Left lung (tissue), 14 donors: ENCODE measurements at regions of chr12 and their contacts with region 1.

Region 1: DNA sequence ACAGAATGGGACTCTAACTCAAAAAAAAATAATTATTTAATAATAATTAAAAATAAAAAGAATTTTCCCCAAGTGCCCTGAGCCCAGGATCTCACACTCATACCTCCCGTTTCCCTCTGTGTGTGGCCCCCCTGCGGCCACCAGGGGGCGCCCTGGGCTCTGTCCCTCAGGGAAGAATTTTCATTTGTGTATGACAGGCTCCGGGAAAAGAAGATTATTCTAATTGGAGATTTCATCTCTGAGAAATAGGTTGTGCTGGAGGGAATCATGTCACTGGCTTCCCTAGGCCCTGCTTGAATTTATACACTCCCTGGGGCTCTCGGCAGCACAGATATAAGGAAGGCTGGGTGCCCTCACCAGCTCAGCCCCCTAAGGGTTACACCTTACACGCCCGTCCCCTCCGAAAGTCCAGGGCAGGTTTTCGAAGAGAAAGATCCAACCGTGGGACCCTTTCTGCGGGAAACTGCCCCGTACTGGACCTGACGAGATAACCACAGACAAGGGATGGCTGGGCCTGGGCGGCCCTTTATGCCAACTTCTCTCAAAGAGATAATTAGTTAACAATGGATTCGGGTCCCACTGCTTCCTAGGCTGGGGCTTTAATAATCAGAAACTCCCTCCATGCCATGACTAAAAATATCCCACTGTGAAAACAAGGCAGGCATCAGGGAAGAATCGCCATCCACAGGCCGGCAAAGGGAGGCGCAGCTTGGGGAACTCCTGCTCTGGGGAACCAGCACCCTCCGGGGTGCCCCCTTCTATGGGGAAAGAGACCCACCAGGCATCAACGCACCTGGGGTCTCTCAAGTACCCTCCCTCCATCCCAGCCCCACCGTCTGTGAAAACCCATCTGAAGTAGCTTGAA is 80.7 kb downstream of the KDM2B start:
- DNase-seq: peak; percentile 66 to 96 (median 80)
- ATAC-seq: peak; percentile 97
- H3K4me3 ChIP-seq: no peak overlapping the region
- H3K27ac ChIP-seq: peak overlapping the region in 1 of 2 donors; percentile 11
- H3K4me1 ChIP-seq: peaks cover 0 to 12% of the 10 kb centered on the region in 2 donors
- H3K27me3 ChIP-seq: no peaks in the 10 kb centered on the region
- CTCF ChIP-seq: peak; percentile 98

Region 2: DNA sequence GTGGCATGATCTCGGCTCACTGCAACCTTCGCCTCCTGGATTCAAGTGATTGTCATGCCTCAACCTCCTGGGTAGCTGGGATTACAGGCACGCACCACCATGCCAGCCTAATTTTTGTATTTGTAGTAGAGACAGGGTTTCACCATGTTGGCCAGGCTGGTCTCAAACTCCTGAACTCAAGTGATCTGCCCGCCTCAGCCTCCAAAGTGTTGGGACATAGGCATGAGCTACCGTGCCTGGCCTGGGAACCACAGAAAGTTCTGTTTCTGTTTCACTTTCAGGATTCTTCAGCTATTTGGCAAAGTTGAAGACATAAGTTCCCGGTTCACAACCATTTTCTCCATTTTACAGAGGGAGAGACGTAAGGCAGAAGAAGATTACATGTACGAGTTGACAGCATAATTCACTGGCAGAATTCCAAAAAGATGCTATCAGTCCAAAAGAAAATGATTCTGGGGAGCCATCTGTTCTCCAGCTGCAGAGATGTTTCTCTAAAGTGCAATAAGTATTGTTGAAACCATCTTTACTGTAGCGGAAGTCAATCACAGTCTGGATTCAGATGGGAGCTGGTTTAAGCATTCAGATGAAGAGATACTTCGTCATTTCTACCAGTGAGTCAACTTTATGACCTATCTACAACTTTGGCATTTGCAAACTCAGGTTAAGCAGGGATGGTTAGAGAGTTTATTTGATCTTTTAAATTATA is 108.4 kb before region 1 on chr12:
- intact Hi-C with region 1: no loop called
- DNase-seq: peak in 2 of 4 donors; percentile 10 to 28
- ATAC-seq: peak; percentile 52
- H3K4me3 ChIP-seq: no peak overlapping the region
- H3K27ac ChIP-seq: peak overlapping the region in 1 of 2 donors; percentile 49
- H3K4me1 ChIP-seq: no peaks in the 10 kb centered on the region
- H3K27me3 ChIP-seq: no peaks in the 10 kb centered on the region
- CTCF ChIP-seq: no peak

Region 3: GRCh38 chr12:121688966-121689365 is 188.8 kb after region 1 on chr12:
- intact Hi-C with region 1: loop called in 1 of 2 experiments (anchors 10 kb)
- DNase-seq: no peak
- ATAC-seq: no peak
- H3K4me3 ChIP-seq: no peak overlapping the region
- H3K27ac ChIP-seq: no peak overlapping the region
- H3K4me1 ChIP-seq: peaks cover 0 to 12% of the 10 kb centered on the region in 2 donors
- H3K27me3 ChIP-seq: no peaks in the 10 kb centered on the region
- CTCF ChIP-seq: no peak